Pancreas (tissue), 10 donors: ENCODE measurements at regions of chr5 and their contacts with region 1.

Region 1: GRCh38 chr5:73454351-73455036 is 5.9 kb upstream of the FOXD1 start:
- DNase-seq: peak in 2 of 6 donors; percentile 43 to 67
- ATAC-seq: peak; percentile 76 to 88 (median 81)
- H3K4me3 ChIP-seq: no peak overlapping the region
- H3K27ac ChIP-seq: no peak overlapping the region
- H3K4me1 ChIP-seq: peaks cover 0 to 6% (median 0%) of the 10 kb centered on the region in 3 donors
- H3K27me3 ChIP-seq: peaks cover 0 to 46% (median 17%) of the 10 kb centered on the region in 4 donors
- CTCF ChIP-seq: peak; percentile 49 to 82 (median 71)

Region 2: DNA sequence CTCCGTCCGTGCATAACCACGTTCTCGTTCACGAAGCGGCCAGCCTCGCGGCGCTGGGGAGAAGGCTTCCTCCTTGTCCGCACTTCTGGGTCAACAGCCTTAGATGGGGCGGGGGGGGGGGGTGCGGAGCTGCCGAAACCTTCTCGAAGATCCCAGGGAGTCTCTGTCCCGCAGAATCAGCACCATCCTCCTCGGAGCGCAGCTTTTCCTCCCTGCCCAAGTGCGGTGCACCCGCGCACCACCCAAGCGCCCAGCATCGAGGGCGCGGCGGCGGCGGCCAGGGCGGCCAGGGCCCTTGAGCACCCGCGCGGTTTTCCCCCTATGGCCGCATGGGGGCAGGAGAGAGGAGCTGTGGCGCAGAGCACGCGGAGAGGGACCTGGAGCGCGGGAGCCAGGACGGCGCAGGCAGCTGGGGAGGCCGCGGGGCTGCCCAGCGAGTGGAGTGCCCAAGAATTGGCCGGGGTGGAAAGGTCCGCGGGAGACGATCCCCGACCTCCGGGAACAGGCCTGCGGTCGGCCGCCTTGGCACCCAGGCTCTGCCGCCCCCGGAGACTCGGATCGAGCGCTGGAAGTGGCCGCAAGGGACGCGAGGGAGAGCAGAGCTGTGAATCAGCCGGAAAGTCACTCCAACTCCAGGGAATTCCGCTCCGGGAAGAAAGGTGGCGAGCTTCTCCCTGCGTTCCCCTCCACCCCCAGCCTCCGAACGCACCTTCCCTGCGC is 238.4 kb before region 1 on chr5:
- intact Hi-C with region 1: loop called in 2 of 3 experiments (anchors 5 kb)
- DNase-seq: peak; percentile 70 to 94 (median 86)
- ATAC-seq: peak; percentile 99 to 100 (median 100)
- H3K4me3 ChIP-seq: peak overlapping the region; percentile 10 to 39 (median 26)
- H3K27ac ChIP-seq: peak overlapping the region in 1 of 4 donors; percentile 19
- H3K4me1 ChIP-seq: no peaks in the 10 kb centered on the region
- H3K27me3 ChIP-seq: peaks cover 0 to 13% (median 2%) of the 10 kb centered on the region in 4 donors
- CTCF ChIP-seq: peak; percentile 76 to 88 (median 78)

Region 3: DNA sequence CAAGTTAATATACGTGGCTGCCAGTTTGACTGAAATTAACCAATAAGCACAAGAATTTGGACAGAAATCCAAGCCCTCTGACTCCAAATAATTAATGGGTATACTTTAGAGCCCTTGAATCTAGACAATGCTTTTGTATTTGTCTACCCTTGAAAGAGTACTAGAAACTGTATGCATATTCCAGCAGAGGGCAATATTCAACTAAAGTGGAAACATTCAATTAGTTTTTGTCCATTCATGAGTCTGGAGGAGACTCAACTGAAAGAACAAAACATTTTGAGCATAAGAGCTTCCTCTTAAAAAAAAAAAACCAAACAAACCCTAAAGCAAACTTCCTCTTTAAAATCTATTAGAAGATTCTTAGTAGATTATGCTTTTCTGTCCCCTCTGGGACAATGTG is 329.3 kb after region 1 on chr5:
- intact Hi-C with region 1: no loop called
- DNase-seq: no peak
- ATAC-seq: peak in 3 of 4 donors; percentile 49 to 59 (median 56)
- H3K4me3 ChIP-seq: no peak overlapping the region
- H3K27ac ChIP-seq: no peak overlapping the region
- H3K4me1 ChIP-seq: peaks cover 0 to 7% (median 0%) of the 10 kb centered on the region in 3 donors
- H3K27me3 ChIP-seq: no peaks in the 10 kb centered on the region
- CTCF ChIP-seq: peak in 1 of 4 donors; percentile 20